ENCODE measurements at regions of chr17 and their contacts with region 1.

Region 1: GRCh38 chr17:80899402-80900268 is 92.0 kb upstream of the CHMP6 start:
- DNase-seq: peak; percentile 87
- H3K4me3 Mint-ChIP-seq: no peak overlapping the region
- H3K27ac Mint-ChIP-seq: peak overlapping the region; percentile 81
- H3K4me1 Mint-ChIP-seq: peaks cover 71% of the 10 kb centered on the region
- H3K27me3 Mint-ChIP-seq: no peaks in the 10 kb centered on the region

Region 2: DNA sequence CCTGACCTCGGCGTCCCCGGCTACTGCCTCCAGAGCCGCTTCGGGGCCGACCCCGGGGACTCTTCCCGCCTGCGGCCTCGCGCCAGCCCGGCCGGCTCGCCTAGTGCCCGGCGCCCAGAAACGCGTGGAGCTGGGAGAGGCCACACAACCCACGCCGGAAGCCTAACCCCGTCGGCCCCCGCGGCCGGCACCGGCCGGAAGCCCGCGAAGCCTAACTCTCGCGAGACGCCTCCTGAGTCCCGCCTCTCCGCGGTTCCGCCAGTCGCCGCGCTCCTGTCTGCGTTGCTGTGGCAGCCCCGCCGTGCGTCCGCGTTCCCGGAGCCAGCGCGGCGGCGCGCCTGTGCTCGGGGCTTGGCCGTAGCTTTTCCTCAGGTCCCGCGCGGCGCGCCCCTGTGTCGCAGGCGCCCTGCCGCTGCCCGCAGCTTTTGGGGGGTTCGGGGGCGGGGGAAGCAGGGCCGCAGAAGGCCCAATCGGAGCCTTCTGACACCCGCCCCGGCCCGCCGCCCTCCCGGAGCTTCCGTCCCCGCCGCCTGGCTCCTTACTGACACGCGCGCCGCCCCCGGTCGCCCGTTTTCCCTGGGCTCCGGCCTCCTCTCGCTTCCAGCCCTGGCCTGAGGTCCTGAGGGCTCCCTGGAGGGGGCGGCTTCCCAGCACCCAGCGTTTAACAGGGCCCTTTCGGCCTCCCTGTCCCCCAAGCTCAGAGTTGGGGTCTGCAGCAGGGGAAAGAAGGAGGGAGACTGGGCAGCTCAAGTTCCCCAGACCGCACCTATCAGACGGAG is 444.9 kb before region 1 on chr17:
- CTCF ChIA-PET with region 1: interaction called, 3 read pairs
- POLR2A ChIA-PET with region 1: interaction called, 21 read pairs
- DNase-seq: peak; percentile 96
- H3K4me3 Mint-ChIP-seq: peak overlapping the region; percentile 85
- H3K27ac Mint-ChIP-seq: peak overlapping the region; percentile 89
- H3K4me1 Mint-ChIP-seq: peaks cover 48% of the 10 kb centered on the region
- H3K27me3 Mint-ChIP-seq: peaks cover 18% of the 10 kb centered on the region

Region 3: DNA sequence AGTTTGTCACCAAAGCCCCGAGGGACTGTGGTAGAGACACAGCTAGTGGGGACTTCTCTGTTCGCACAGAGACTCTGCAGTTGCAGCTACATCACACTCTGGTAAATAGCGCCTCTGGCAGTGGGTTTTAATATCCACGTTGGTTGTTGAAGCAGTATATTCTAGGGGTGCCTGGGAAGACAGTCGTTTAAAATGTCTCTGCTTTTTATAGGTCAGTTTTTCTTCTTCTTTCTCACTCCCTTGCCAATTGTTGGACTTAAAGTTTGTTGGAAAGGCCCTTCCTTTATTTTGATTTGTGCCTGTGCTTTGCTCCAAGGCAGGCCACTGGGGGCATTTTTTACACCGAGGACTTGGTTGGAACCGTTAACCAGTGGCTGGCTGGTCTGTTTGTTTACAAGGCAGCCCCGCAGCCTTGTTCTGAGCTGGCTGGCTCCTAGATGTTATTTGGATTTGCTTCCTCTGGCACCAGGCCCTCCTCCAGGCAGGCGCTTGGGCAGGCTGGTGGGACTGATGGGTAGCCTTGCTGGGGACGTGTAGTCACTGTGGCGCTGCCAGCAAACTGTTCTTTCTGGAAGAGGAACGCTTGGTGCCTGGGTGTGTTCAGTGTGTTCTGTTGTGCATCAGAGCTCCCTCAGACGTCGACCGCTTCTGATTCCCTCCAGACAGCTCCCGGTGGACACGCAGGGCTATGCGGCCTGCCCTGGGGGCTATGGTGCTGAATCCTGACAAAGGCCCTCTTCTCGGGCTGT is 126.2 kb before region 1 on chr17:
- CTCF ChIA-PET with region 1: interaction called, 10 read pairs
- POLR2A ChIA-PET with region 1: no interaction called
- DNase-seq: no peak
- H3K4me3 Mint-ChIP-seq: no peak overlapping the region
- H3K27ac Mint-ChIP-seq: no peak overlapping the region
- H3K4me1 Mint-ChIP-seq: peaks cover 53% of the 10 kb centered on the region
- H3K27me3 Mint-ChIP-seq: no peaks in the 10 kb centered on the region

Region 4: DNA sequence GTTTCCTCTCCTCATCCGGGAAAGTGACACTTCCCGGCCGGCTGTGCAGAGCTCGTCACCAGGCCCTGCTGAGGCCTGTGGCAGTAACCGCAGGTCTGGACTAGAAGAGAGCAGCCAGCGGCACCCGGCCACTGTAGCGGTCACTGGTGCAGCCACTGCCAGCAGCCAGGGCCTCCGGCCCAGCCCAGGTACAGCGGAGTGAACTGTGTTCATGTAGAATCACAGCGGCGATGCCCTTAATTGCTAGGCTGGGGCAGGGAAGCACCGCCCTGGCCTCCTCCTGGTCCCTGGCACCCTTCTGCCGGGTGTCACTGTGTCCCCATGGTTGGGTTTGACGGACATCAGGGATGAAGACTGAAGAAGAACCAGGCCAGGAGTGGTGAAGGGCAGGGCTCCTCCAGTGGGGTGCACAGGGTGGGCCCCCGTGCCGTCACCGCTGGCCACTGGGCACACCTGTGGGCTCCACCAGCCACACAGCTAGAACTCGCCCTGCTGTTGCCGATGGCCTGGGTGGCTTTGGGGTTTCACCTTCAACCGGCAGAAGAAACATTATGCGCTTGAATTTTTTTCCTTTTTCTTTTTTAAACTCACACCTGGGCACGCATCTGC is 73.2 kb before region 1 on chr17:
- CTCF ChIA-PET with region 1: no interaction called
- POLR2A ChIA-PET with region 1: no interaction called
- DNase-seq: no peak
- H3K4me3 Mint-ChIP-seq: no peak overlapping the region
- H3K27ac Mint-ChIP-seq: peak overlapping the region; percentile 56
- H3K4me1 Mint-ChIP-seq: peaks cover 52% of the 10 kb centered on the region
- H3K27me3 Mint-ChIP-seq: no peaks in the 10 kb centered on the region

Region 5: DNA sequence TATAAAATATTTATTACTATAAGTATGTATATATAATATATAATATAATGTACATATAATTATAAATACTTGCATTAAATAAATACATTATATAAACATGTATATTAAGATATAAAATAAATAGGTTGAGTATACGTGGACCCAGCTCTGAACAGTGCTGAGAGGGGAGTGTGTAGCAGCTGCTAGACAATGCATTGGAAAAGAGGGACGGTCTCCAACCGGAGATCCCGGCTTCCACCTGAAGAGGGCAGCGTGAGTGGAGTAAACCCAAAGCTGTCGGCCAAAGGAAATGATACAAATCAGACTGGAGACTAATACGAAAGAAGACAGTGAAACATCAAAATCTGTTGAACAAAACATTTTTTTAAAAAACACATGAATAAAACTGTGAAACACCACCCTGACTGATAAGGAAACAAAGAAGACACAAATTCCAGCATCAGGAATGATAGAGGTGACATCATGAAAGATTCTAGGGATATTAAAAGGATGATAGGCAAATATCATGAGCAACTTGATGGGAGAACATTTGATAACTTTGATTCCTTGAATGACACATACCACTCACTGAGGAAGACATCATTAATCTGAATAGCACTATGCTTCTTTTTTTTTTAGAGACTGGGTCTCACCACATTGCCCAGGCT is 33.4 kb before region 1 on chr17:
- CTCF ChIA-PET with region 1: interaction called, 11 read pairs
- POLR2A ChIA-PET with region 1: interaction called, 135 read pairs
- DNase-seq: peak; percentile 80
- H3K4me3 Mint-ChIP-seq: no peak overlapping the region
- H3K27ac Mint-ChIP-seq: peak overlapping the region; percentile 61
- H3K4me1 Mint-ChIP-seq: peaks cover 78% of the 10 kb centered on the region
- H3K27me3 Mint-ChIP-seq: no peaks in the 10 kb centered on the region